ENCODE measurements at regions of chr14 and their contacts with region 1.

Region 1: GRCh38 chr14:51979088-51979709 is 10.1 kb upstream of the RTRAF start:
- DNase-seq: peak; percentile 80
- H3K4me3 ChIP-seq: no peak overlapping the region
- H3K27ac ChIP-seq: no peak overlapping the region
- H3K4me1 ChIP-seq: no peaks in the 10 kb centered on the region
- H3K27me3 ChIP-seq: peaks cover 22 to 34% of the 10 kb centered on the region in 2 experiments
- CTCF ChIP-seq: peak; percentile 82 to 90
- POLR2A ChIP-seq: no peak

Region 2: GRCh38 chr14:51554953-51555352 is 424.2 kb before region 1 on chr14:
- CTCF ChIA-PET with region 1: no interaction called
- POLR2A ChIA-PET with region 1: no interaction called
- dilution Hi-C with region 1: no loop called
- intact Hi-C with region 1: no loop called
- DNase-seq: no peak
- H3K4me3 ChIP-seq: no peak overlapping the region
- H3K27ac ChIP-seq: peak overlapping the region; percentile 59
- H3K4me1 ChIP-seq: peaks cover 20% of the 10 kb centered on the region
- H3K27me3 ChIP-seq: no peaks in the 10 kb centered on the region
- CTCF ChIP-seq: no peak
- POLR2A ChIP-seq: no peak

Region 3: DNA sequence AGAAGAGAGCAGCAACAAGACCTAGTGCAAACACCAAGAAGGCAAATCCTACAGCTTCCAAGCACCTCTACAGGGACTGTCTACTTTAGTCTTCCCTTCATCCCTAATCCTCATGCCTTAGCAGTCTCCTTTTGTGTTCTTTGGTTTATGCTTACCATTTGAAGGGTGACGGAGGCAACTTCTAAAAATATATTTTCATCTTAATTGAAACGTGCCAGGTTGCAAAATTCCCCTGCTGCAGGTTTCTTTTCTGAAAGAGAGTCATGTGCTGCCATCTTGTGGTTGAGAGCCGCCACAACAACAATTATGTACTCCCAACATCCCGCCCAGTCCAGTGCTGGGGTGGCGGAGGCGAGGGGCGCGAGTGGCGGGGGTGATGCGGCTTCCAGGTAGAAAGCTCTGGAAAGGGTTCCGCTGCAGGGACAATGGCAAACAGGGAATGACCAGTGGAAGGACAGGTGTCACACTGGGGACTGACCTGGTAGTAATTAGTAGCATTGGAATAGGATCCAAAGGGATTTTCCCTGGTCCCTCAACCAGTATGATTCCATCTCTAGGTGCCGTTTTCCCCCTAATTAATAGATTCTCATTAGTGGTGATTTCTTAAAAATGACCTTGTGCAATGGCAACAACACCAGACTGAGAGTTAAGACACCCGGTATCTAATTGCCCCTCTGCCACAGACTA is 199.1 kb before region 1 on chr14:
- CTCF ChIA-PET with region 1: interaction called, 15 read pairs
- POLR2A ChIA-PET with region 1: no interaction called
- dilution Hi-C with region 1: no loop called
- intact Hi-C with region 1: loop called (anchors 1 kb)
- DNase-seq: peak; percentile 67
- H3K4me3 ChIP-seq: no peak overlapping the region
- H3K27ac ChIP-seq: no peak overlapping the region
- H3K4me1 ChIP-seq: peaks cover 3% of the 10 kb centered on the region
- H3K27me3 ChIP-seq: peaks cover 18 to 38% of the 10 kb centered on the region in 2 experiments
- CTCF ChIP-seq: peak; percentile 66 to 78
- POLR2A ChIP-seq: no peak

Region 4: GRCh38 chr14:51846631-51847488 is 132.3 kb before region 1 on chr14:
- CTCF ChIA-PET with region 1: interaction called, 3 read pairs
- POLR2A ChIA-PET with region 1: no interaction called
- dilution Hi-C with region 1: no loop called
- intact Hi-C with region 1: loop called (anchors 5 kb)
- DNase-seq: peak; percentile 72
- H3K4me3 ChIP-seq: peak overlapping the region in 1 of 3 experiments; percentile 8
- H3K27ac ChIP-seq: peak overlapping the region; percentile 13
- H3K4me1 ChIP-seq: peaks cover 13% of the 10 kb centered on the region
- H3K27me3 ChIP-seq: peaks cover 0 to 11% of the 10 kb centered on the region in 2 experiments
- CTCF ChIP-seq: no peak
- POLR2A ChIP-seq: no peak

Region 5: DNA sequence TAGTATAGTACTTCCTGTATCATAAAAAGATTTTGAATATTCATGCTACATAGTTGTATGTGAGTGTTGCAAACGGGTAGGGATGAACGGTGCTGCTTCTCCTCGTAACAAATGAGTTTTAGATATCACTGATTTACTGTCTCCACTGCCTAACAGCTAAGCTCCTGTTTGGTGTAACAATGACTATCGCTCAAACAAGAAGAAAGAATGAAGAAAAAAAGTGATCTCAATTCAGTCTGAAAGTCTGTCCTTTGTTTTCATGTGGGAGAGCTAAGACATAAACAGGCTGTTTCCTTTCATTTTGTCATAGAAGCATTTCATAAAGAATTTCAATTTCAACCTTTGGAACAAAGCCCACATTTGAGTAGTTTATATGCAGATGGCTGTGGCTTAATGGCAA is 15.9 kb before region 1 on chr14:
- CTCF ChIA-PET with region 1: interaction called, 36 read pairs
- POLR2A ChIA-PET with region 1: no interaction called
- dilution Hi-C with region 1: no loop called
- intact Hi-C with region 1: no loop called
- DNase-seq: peak; percentile 64
- H3K4me3 ChIP-seq: no peak overlapping the region
- H3K27ac ChIP-seq: no peak overlapping the region
- H3K4me1 ChIP-seq: peaks cover 3% of the 10 kb centered on the region
- H3K27me3 ChIP-seq: peaks cover 26 to 31% of the 10 kb centered on the region in 2 experiments
- CTCF ChIP-seq: no peak
- POLR2A ChIP-seq: no peak

Region 6: GRCh38 chr14:52131640-52132320 is 152.6 kb after region 1 on chr14:
- CTCF ChIA-PET with region 1: interaction called, 4 read pairs
- POLR2A ChIA-PET with region 1: no interaction called
- dilution Hi-C with region 1: no loop called
- intact Hi-C with region 1: loop called (anchors 1 kb)
- DNase-seq: peak; percentile 86
- H3K4me3 ChIP-seq: no peak overlapping the region
- H3K27ac ChIP-seq: no peak overlapping the region
- H3K4me1 ChIP-seq: peaks cover 3% of the 10 kb centered on the region
- H3K27me3 ChIP-seq: no peaks in the 10 kb centered on the region
- CTCF ChIP-seq: peak; percentile 65 to 78
- POLR2A ChIP-seq: no peak